Psoas muscle (tissue), 8 donors: ENCODE measurements at regions of chr1 and their contacts with region 1.

Region 1: GRCh38 chr1:155001675-155002463 is 733 bp upstream of the ZBTB7B start:
- DNase-seq: peak; percentile 100
- ATAC-seq: peak; percentile 71 to 75 (median 74)
- H3K4me3 ChIP-seq: peak overlapping the region; percentile 78
- H3K27ac ChIP-seq: peak overlapping the region; percentile 91
- H3K4me1 ChIP-seq: peaks cover 42% of the 10 kb centered on the region
- H3K27me3 ChIP-seq: no peaks in the 10 kb centered on the region
- CTCF ChIP-seq: peak; percentile 26

Region 2: DNA sequence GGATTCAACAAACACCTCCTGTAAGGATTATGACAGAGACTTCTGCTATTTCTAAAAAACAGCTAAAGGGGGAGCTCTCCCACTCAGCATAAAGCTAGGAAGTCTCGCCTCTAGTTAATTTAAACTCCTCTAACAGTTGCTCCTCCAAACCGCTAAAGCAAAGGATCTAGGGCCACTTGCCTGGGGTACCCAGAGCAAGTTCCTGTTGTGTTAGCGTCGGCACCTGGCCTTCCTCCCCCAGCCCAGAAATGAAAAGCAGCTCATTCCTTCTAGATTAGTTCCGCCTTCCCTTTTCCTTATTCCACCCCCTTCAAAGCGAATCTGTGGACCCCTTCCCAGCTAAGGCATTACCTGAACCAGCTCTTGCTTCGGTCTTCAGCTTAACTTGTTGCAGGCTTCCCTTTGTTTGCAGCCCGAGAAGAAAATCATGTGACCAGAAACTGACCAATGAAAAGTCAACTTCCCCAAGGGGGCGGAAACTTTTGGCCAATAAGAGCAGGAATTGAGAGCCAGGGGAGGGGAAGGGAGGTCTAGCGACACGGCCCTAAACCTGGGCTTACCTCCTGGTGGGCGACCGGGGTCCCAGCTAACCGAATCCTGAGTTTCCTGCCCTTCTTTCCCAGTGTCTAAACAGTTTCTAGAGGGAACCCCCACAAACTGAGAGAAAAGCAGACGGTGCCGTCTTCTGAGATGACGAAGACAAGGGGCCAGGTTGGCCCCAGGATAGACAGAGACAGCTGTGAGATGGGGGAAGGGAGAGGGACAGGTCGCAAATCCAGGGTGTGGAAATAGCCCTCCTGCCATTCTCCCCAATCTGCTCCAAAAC is 45.9 kb before region 1 on chr1 and contains the start of gene PBXIP1:
- intact Hi-C with region 1: loop called (anchors 1 to 5 kb)
- DNase-seq: peak; percentile 54 to 75
- ATAC-seq: peak; percentile 87 to 91 (median 88)
- H3K4me3 ChIP-seq: peak within 1 kb of the TSS; percentile 71
- H3K27ac ChIP-seq: peak within 1 kb of the TSS; percentile 88
- H3K4me1 ChIP-seq: peaks cover 54% of the 10 kb centered on the region
- H3K27me3 ChIP-seq: no peaks in the 10 kb centered on the region
- CTCF ChIP-seq: no peak
- total RNA-seq, gene PBXIP1: 76.5 to 149 (median 104) TPM

Region 3: GRCh38 chr1:154961497-154962262 is 40.2 kb before region 1 on chr1 and contains the start of gene PYGO2:
- intact Hi-C with region 1: loop called (anchors 1 to 5 kb)
- DNase-seq: peak; percentile 84 to 90
- ATAC-seq: peak; percentile 82 to 86 (median 83)
- H3K4me3 ChIP-seq: peak within 1 kb of the TSS; percentile 76
- H3K27ac ChIP-seq: peak within 1 kb of the TSS; percentile 93
- H3K4me1 ChIP-seq: peaks cover 30% of the 10 kb centered on the region
- H3K27me3 ChIP-seq: no peaks in the 10 kb centered on the region
- CTCF ChIP-seq: peak; percentile 72
- total RNA-seq, gene PYGO2: 14.5 to 23.0 (median 17.4) TPM

Region 4: DNA sequence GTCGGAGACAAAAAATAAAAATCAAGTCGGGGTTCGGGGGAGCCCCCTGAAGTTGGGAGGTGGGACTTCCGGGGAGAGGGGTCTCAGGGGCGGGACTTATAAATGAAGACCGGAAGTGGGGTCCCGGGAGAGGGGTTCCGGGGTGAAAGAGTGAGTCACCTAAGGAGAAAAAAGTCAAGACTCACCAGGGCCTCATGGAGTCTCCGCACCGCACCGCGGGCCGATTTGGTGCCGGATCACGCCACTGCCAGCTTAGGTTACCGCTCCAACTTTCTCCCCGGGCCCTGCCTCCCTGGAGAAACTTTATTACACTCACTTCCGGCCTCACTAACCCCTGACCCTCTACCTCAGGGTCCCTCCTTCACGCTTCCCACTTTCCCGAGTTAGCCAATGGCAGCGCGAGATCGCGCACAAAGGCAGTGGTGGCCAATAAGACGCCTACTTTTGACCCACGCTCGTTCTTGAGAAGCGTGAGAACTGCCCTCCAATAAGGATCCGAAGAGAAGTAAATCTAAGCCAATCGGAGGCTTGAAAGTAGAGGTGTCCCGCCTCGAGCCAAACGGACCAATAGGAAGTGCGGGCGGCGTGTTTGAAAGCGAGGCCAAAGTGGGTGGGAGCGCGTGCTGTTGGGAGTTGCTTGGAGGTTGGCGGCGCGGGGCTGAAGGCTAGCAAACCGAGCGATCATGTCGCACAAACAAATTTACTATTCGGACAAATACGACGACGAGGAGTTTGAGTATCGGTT is 27.6 kb before region 1 on chr1 and contains the start of gene CKS1B:
- intact Hi-C with region 1: loop called in 1 of 2 experiments (anchors 2 kb)
- DNase-seq: peak; percentile 97 to 98
- ATAC-seq: peak; percentile 86 to 89 (median 86)
- H3K4me3 ChIP-seq: peak within 1 kb of the TSS; percentile 84
- H3K27ac ChIP-seq: peak within 1 kb of the TSS; percentile 99
- H3K4me1 ChIP-seq: peaks cover 49% of the 10 kb centered on the region
- H3K27me3 ChIP-seq: no peaks in the 10 kb centered on the region
- CTCF ChIP-seq: no peak
- total RNA-seq, gene CKS1B: 5.5 to 13.8 (median 6.9) TPM

Region 5: DNA sequence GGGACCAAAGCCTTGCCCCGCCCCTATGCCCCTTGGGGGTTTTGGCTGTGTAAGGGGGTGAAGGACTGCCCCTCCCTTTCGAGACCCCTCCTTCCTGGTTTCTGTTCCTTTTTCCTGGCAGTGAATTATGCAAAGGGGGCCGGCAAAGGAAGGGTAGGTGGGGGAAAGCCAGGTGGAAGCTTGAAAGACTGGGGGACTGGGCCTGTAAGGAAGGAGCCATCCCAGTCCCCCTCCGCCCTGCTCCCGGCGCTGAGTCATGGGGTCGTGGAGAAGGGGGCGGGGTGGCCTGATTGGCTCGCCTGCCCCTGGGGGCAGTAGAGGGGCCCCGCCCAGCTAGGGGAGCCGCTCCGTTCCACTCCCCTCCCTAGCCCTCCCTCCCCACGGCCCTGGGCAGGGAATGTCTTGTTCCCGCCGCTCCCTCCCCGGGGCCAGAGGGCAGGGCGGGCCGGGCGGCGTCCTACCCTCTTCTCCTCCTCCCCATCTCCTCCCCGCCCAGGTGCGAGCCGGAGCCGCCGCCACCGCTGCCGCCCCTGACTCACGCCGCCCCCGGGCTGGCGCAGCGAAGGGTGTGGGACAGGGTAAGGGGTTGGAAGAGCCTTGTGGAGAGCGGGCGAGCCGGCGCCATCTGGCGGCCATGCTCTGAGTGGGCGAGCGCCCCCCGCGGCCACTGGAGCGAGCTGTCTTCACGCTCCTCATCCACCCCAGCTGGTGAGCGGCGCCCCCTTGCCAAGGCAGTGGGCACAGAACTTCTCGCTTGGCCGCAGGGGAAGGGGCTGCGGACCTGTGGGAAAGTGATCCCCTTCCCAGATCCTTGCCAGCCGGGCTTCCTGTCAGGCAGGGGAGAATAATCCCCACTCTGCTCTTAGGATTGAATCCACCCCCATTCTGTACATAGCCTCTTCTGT is 15.4 kb after region 1 on chr1:
- intact Hi-C with region 1: loop called in 1 of 2 experiments (anchors 2 kb)
- DNase-seq: peak; percentile 91 to 97
- ATAC-seq: peak; percentile 87 to 92 (median 88)
- H3K4me3 ChIP-seq: peak overlapping the region; percentile 67
- H3K27ac ChIP-seq: peak overlapping the region; percentile 85
- H3K4me1 ChIP-seq: peaks cover 22% of the 10 kb centered on the region
- H3K27me3 ChIP-seq: no peaks in the 10 kb centered on the region
- CTCF ChIP-seq: peak; percentile 99